Psoas muscle (tissue), 8 donors: ENCODE measurements at regions of chr3 and their contacts with region 1.

Region 1: GRCh38 chr3:84978843-84979242 is 20.1 kb downstream of the CADM2 start:
- DNase-seq: no peak
- ATAC-seq: peak in 2 of 4 donors; percentile 66 to 73
- H3K4me3 ChIP-seq: no peak overlapping the region
- H3K27ac ChIP-seq: no peak overlapping the region
- H3K4me1 ChIP-seq: peaks cover 12% of the 10 kb centered on the region
- H3K27me3 ChIP-seq: no peaks in the 10 kb centered on the region
- CTCF ChIP-seq: no peak

Region 2: GRCh38 chr3:85360742-85361387 is 382.0 kb after region 1 on chr3:
- intact Hi-C with region 1: loop called in 1 of 2 experiments (anchors 5 kb)
- DNase-seq: peak in 1 of 2 donors; percentile 21
- ATAC-seq: peak; percentile 59 to 86 (median 78)
- H3K4me3 ChIP-seq: no peak overlapping the region
- H3K27ac ChIP-seq: no peak overlapping the region
- H3K4me1 ChIP-seq: no peaks in the 10 kb centered on the region
- H3K27me3 ChIP-seq: no peaks in the 10 kb centered on the region
- CTCF ChIP-seq: peak; percentile 56